ENCODE measurements at regions of chr4 and their contacts with region 1.

Region 1: GRCh38 chr4:15956179-15956850 is 6.7 kb downstream of the FGFBP2 start:
- DNase-seq: peak; percentile 89
- H3K4me3 Mint-ChIP-seq: no peak overlapping the region
- H3K27ac Mint-ChIP-seq: no peak overlapping the region
- H3K4me1 Mint-ChIP-seq: peaks cover 10% of the 10 kb centered on the region
- H3K27me3 Mint-ChIP-seq: no peaks in the 10 kb centered on the region
- CTCF ChIP-seq: peak; percentile 92

Region 2: GRCh38 chr4:15805583-15806517 is 150.5 kb before region 1 on chr4:
- CTCF ChIA-PET with region 1: interaction called, 148 read pairs
- POLR2A ChIA-PET with region 1: interaction called, 6 read pairs
- intact Hi-C with region 1: loop called (anchors 1 kb)
- DNase-seq: peak; percentile 80
- H3K4me3 Mint-ChIP-seq: no peak overlapping the region
- H3K27ac Mint-ChIP-seq: no peak overlapping the region
- H3K4me1 Mint-ChIP-seq: peaks cover 5% of the 10 kb centered on the region
- H3K27me3 Mint-ChIP-seq: peaks cover 43% of the 10 kb centered on the region
- CTCF ChIP-seq: peak; percentile 67

Region 3: DNA sequence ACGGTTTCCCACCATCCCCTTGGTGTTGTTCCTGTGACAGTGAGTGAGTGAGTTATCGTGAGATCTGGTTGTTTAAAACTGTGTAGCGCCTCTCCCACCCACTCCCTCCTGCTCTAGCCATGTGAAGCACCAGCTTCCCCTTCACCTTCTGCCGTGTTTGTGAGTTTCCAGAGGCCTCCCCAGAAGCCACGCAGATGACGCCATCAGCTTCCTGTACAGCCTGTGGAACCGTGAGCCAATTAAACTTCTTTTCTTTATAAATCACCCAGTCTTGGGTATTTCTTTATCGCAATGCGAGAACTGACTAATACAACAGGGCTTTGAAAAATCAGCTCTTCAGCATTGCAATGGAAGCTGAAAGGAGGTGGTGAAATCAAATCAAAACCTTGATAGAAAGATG is 67.8 kb before region 1 on chr4:
- CTCF ChIA-PET with region 1: interaction called, 357 read pairs
- POLR2A ChIA-PET with region 1: interaction called, 27 read pairs
- intact Hi-C with region 1: no loop called
- DNase-seq: no peak
- H3K4me3 Mint-ChIP-seq: no peak overlapping the region
- H3K27ac Mint-ChIP-seq: no peak overlapping the region
- H3K4me1 Mint-ChIP-seq: peaks cover 7% of the 10 kb centered on the region
- H3K27me3 Mint-ChIP-seq: no peaks in the 10 kb centered on the region
- CTCF ChIP-seq: no peak

Region 4: DNA sequence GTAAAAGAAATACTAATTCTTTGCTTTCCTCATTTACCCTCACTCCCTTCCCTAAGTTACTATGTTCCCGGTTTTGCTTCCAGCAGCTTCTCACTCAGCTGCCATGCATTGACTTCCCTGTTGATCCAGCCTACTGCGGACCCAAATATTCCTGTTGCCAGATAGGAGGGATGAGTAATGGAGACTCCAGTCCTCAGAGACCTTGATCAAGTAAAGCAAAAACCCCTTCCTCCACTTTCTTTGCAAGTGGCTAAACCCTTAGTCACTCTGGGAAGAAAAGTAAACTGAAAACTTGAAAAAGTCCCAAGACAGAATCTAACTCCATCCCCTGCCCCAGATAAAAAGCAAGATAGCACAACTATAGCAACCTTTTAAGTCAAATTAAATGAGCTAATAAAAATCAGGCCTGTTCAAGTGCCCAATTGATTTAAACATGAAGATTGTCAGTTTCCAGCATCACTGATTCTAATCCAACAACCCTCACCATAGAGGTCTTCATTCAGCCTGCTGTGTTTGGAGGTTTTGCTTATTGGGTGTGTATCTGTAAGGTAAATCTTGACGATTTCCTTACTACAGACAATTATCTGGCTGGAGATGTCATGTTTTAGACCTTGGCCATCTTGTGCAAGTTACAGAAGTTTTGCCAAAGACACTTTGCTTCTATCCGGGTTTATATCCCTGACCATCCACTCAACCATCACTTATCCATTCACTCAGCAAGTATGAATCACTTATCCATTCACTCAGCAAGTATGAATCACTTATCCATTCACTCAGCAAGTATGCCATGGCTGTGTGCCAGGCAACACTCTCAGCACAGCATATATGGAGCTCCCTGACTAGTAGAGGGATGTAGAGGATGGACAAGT is 35.4 kb before region 1 on chr4:
- CTCF ChIA-PET with region 1: interaction called, 10 read pairs
- POLR2A ChIA-PET with region 1: no interaction called
- intact Hi-C with region 1: no loop called
- DNase-seq: peak; percentile 97
- H3K4me3 Mint-ChIP-seq: no peak overlapping the region
- H3K27ac Mint-ChIP-seq: peak overlapping the region; percentile 36
- H3K4me1 Mint-ChIP-seq: peaks cover 40% of the 10 kb centered on the region
- H3K27me3 Mint-ChIP-seq: no peaks in the 10 kb centered on the region
- CTCF ChIP-seq: no peak

Region 5: GRCh38 chr4:15976456-15977447 is 20.4 kb after region 1 on chr4:
- CTCF ChIA-PET with region 1: interaction called, 13 read pairs
- POLR2A ChIA-PET with region 1: no interaction called
- intact Hi-C with region 1: no loop called
- DNase-seq: no peak
- H3K4me3 Mint-ChIP-seq: no peak overlapping the region
- H3K27ac Mint-ChIP-seq: no peak overlapping the region
- H3K4me1 Mint-ChIP-seq: no peaks in the 10 kb centered on the region
- H3K27me3 Mint-ChIP-seq: peaks cover 28% of the 10 kb centered on the region
- CTCF ChIP-seq: no peak

Measured in MCF 10A (cell line).